A549 (cell line): ENCODE measurements at regions of chr2 and their contacts with region 1.

Region 1: GRCh38 chr2:71190656-71191569 is 36.0 kb downstream of the PAIP2B start:
- DNase-seq: peak in 1 of 2 experiments; percentile 42
- ATAC-seq: peak; percentile 72 to 79
- H3K4me3 ChIP-seq: no peak overlapping the region
- H3K27ac ChIP-seq: no peak overlapping the region
- H3K4me1 ChIP-seq: no peaks in the 10 kb centered on the region
- CTCF ChIP-seq: peak; percentile 55
- EP300 ChIP-seq: no peak
- POLR2A ChIP-seq: no peak
- RAD21 ChIP-seq: peak; percentile 58 to 62; a peak in 4 of 5 replicates

Region 2: DNA sequence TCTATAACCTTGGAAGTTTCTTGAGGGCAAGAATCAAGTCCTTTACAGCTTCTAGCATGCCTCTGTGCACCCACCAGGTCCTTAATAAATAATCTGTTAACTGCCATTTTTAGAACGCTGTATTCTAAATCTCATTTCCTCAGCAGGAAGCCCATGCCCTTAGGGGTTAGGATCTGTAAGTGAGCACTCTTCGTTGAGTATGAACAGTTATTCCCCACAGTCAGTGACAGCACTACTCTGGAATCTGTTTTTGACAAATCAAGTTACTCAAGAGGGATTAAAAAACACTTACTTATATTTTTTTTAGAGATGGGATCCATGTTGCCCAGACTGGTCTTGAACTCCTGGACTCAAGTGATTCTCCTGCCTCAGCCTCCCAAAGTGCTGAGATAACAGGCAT is 21.4 kb after region 1 on chr2:
- CTCF ChIA-PET with region 1: interaction called, 14 read pairs
- POLR2A ChIA-PET with region 1: no interaction called
- DNase-seq: no peak
- ATAC-seq: no peak
- H3K4me3 ChIP-seq: no peak overlapping the region
- H3K27ac ChIP-seq: no peak overlapping the region
- H3K4me1 ChIP-seq: no peaks in the 10 kb centered on the region
- CTCF ChIP-seq: no peak
- EP300 ChIP-seq: no peak
- POLR2A ChIP-seq: no peak
- RAD21 ChIP-seq: no peak

Region 3: GRCh38 chr2:71256421-71256820 is 65.5 kb after region 1 on chr2:
- CTCF ChIA-PET with region 1: no interaction called
- POLR2A ChIA-PET with region 1: no interaction called
- DNase-seq: no peak
- ATAC-seq: no peak
- H3K4me3 ChIP-seq: no peak overlapping the region
- H3K27ac ChIP-seq: no peak overlapping the region
- H3K4me1 ChIP-seq: no peaks in the 10 kb centered on the region
- CTCF ChIP-seq: no peak
- EP300 ChIP-seq: no peak
- POLR2A ChIP-seq: no peak
- RAD21 ChIP-seq: no peak